RWPE1 (cell line): ENCODE measurements at regions of chr10 and their contacts with region 1.

Region 1: GRCh38 chr10:94402015-94402842 is at the start of gene TBC1D12:
- DNase-seq: peak; percentile 91
- H3K27ac ChIP-seq: peak within 1 kb of the TSS; percentile 93
- CTCF ChIP-seq: no peak

Region 2: DNA sequence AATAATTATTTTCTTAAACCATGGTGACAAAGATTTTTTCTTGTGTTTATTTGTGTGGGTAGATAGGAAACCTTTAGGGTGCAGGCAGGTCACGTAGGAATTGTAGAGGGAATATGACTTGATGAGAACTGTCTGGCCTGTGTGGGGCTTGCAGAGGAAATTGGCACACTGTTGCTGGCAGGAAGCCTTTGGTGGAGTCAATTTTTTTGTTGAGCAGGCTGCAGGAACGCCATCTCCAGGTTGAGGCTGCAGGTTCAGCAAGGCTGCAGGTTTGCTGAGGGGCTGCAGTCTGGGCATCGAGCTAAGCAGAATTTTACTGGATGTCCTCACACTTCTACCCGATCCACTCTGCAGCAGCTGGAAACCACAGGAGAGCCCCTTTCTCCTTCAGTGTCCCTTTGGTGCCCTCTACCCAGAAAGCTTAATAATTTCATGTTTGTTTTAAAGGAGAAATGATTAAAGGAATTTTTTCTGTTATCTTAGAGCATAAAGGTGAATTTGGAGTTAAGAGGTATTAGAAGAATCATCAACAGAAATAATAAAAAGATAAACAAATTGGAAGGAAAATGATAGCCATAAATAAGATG is 37.1 kb after region 1 on chr10:
- CTCF ChIA-PET with region 1: interaction called, 13 read pairs
- POLR2A ChIA-PET with region 1: no interaction called
- DNase-seq: no peak
- H3K27ac ChIP-seq: no peak overlapping the region
- CTCF ChIP-seq: peak; percentile 18; the same call in 1 of the 2 replicates